ENCODE measurements at regions of chr15 and their contacts with region 1.

Region 1: DNA sequence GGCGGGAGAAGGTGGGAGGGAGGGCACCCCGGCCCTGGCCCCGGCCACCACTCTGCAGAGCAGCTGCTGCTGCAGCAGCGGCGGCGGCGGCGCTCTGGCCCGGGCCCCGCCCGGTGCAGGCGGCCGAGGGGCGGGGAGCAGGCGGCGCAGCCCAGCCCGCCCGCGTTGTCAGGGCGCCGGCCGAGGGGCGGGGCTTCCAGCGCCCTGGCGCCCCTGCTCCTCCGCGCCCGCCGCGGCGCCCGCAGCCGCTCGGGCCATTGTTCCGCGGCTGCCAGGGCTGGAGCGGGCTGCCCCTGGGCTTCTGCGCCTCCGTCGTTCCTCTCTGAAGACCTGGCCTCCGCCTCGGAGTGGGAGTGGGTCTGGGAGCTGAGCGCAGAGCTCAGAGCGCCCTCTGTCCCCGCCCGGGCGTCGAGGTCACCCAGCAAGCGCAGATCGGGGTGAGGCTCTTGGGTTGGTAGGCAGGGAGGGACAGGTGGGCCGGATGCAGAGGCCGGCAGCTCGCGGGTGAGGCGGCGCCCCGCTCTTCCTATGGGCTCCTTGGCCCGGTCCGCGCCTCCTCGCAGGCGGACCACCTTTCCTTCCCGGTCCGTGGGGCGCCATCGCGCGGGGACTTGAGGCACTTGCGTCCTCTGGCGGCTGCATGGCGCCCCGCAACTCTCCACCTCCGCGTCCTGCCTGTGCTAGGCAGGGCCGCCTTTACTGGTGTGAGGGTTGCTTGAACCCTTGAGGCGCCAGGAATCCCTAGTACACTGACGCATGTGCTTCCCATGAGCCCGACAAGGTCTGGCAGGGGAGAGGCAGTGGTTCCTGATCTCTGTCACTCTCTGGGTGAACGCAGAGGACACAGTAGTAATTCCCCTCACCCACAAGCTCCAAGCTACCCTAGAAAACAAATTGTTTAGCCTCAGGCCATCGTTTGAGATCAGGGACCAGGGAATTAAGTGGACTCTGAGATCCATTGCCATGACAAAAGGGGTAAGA is at the start of gene LPCAT4:
- DNase-seq: peak; percentile 82 to 96 (median 88)
- ATAC-seq: peak; percentile 84
- H3K4me3 ChIP-seq: peak within 1 kb of the TSS; percentile 94
- H3K4me3 Mint-ChIP-seq: peak within 1 kb of the TSS; percentile 97
- H3K27ac ChIP-seq: peak within 1 kb of the TSS; percentile 80 to 88
- H3K27ac Mint-ChIP-seq: peak within 1 kb of the TSS; percentile 92
- H3K4me1 ChIP-seq: peaks cover 40% of the 10 kb centered on the region
- H3K4me1 Mint-ChIP-seq: peaks cover 43% of the 10 kb centered on the region
- H3K27me3 ChIP-seq: no peaks in the 10 kb centered on the region
- H3K27me3 Mint-ChIP-seq: no peaks in the 10 kb centered on the region
- CTCF ChIP-seq: peak; percentile 90
- total RNA-seq, gene LPCAT4: 41.0 to 45.2 TPM

Region 2: GRCh38 chr15:33126559-33127290 is 1240.7 kb before region 1 on chr15:
- CTCF ChIA-PET with region 1: no interaction called
- POLR2A ChIA-PET with region 1: no interaction called
- intact Hi-C with region 1: loop called in 1 of 2 experiments (anchors 5 kb)
- DNase-seq: peak; percentile 33 to 89 (median 71)
- ATAC-seq: peak; percentile 81
- H3K4me3 ChIP-seq: peak overlapping the region; percentile 13
- H3K4me3 Mint-ChIP-seq: peak overlapping the region; percentile 72
- H3K27ac ChIP-seq: no peak overlapping the region
- H3K27ac Mint-ChIP-seq: peak overlapping the region; percentile 76
- H3K4me1 ChIP-seq: peaks cover 13% of the 10 kb centered on the region
- H3K4me1 Mint-ChIP-seq: peaks cover 31% of the 10 kb centered on the region
- H3K27me3 ChIP-seq: no peaks in the 10 kb centered on the region
- H3K27me3 Mint-ChIP-seq: no peaks in the 10 kb centered on the region
- CTCF ChIP-seq: no peak

Region 3: GRCh38 chr15:34101366-34102175 is 265.8 kb before region 1 on chr15 and contains the starts of genes EMC7 and PGBD4:
- CTCF ChIA-PET with region 1: interaction called, 9 read pairs
- POLR2A ChIA-PET with region 1: interaction called, 14 read pairs
- intact Hi-C with region 1: loop called in 1 of 2 experiments (anchors 2 kb)
- DNase-seq: peak; percentile 97 to 100 (median 99)
- ATAC-seq: peak; percentile 96
- H3K4me3 ChIP-seq: peak within 1 kb of the TSS; percentile 80
- H3K4me3 Mint-ChIP-seq: peak within 1 kb of the TSS; percentile 91
- H3K27ac ChIP-seq: peak within 1 kb of the TSS; percentile 86 to 97
- H3K27ac Mint-ChIP-seq: peak within 1 kb of the TSS; percentile 96
- H3K4me1 ChIP-seq: peaks cover 20% of the 10 kb centered on the region
- H3K4me1 Mint-ChIP-seq: peaks cover 54% of the 10 kb centered on the region
- H3K27me3 ChIP-seq: no peaks in the 10 kb centered on the region
- H3K27me3 Mint-ChIP-seq: no peaks in the 10 kb centered on the region
- CTCF ChIP-seq: no peak
- total RNA-seq, gene EMC7: 54.0 to 54.6 TPM
- total RNA-seq, gene PGBD4: 2.3 to 2.6 TPM

Region 4: GRCh38 chr15:34248190-34248589 is 119.2 kb before region 1 on chr15:
- CTCF ChIA-PET with region 1: interaction called, 51 read pairs
- POLR2A ChIA-PET with region 1: interaction called, 39 read pairs
- intact Hi-C with region 1: no loop called
- DNase-seq: no peak
- ATAC-seq: no peak
- H3K4me3 ChIP-seq: no peak overlapping the region
- H3K4me3 Mint-ChIP-seq: no peak overlapping the region
- H3K27ac ChIP-seq: no peak overlapping the region
- H3K27ac Mint-ChIP-seq: no peak overlapping the region
- H3K4me1 ChIP-seq: no peaks in the 10 kb centered on the region
- H3K4me1 Mint-ChIP-seq: no peaks in the 10 kb centered on the region
- H3K27me3 ChIP-seq: no peaks in the 10 kb centered on the region
- H3K27me3 Mint-ChIP-seq: no peaks in the 10 kb centered on the region
- CTCF ChIP-seq: no peak

Region 5: GRCh38 chr15:34331809-34332208 is 35.6 kb before region 1 on chr15:
- CTCF ChIA-PET with region 1: interaction called, 37 read pairs
- POLR2A ChIA-PET with region 1: interaction called, 72 read pairs
- intact Hi-C with region 1: loop called in 1 of 2 experiments (anchors 5 kb)
- DNase-seq: peak in 3 of 14 experiments; percentile 43 to 62 (median 49)
- ATAC-seq: peak; percentile 40
- H3K4me3 ChIP-seq: no peak overlapping the region
- H3K4me3 Mint-ChIP-seq: peak overlapping the region; percentile 40
- H3K27ac ChIP-seq: peak overlapping the region; percentile 18 to 39
- H3K27ac Mint-ChIP-seq: peak overlapping the region; percentile 98
- H3K4me1 ChIP-seq: peaks cover 55% of the 10 kb centered on the region
- H3K4me1 Mint-ChIP-seq: peaks cover 87% of the 10 kb centered on the region
- H3K27me3 ChIP-seq: no peaks in the 10 kb centered on the region
- H3K27me3 Mint-ChIP-seq: no peaks in the 10 kb centered on the region
- CTCF ChIP-seq: no peak

Region 6: GRCh38 chr15:34437687-34438086 is 70.3 kb after region 1 on chr15 and contains the start of gene GOLGA8A:
- CTCF ChIA-PET with region 1: interaction called, 3 read pairs
- POLR2A ChIA-PET with region 1: interaction called, 15 read pairs
- intact Hi-C with region 1: loop called in 1 of 2 experiments (anchors 2 kb)
- DNase-seq: peak; percentile 72 to 93 (median 84)
- ATAC-seq: peak; percentile 79
- H3K4me3 ChIP-seq: peak within 1 kb of the TSS; percentile 60
- H3K4me3 Mint-ChIP-seq: peak within 1 kb of the TSS; percentile 100
- H3K27ac ChIP-seq: peak within 1 kb of the TSS in 1 of 2 donors; percentile 7
- H3K27ac Mint-ChIP-seq: peak within 1 kb of the TSS; percentile 96
- H3K4me1 ChIP-seq: peaks cover 17% of the 10 kb centered on the region
- H3K4me1 Mint-ChIP-seq: peaks cover 27% of the 10 kb centered on the region
- H3K27me3 ChIP-seq: no peaks in the 10 kb centered on the region
- H3K27me3 Mint-ChIP-seq: peaks cover 5% of the 10 kb centered on the region
- CTCF ChIP-seq: no peak
- total RNA-seq, gene GOLGA8A: 276 to 295 TPM

Region 7: GRCh38 chr15:34927726-34928125 is 560.3 kb after region 1 on chr15:
- CTCF ChIA-PET with region 1: no interaction called
- POLR2A ChIA-PET with region 1: no interaction called
- intact Hi-C with region 1: no loop called
- DNase-seq: no peak
- ATAC-seq: no peak
- H3K4me3 ChIP-seq: no peak overlapping the region
- H3K4me3 Mint-ChIP-seq: no peak overlapping the region
- H3K27ac ChIP-seq: no peak overlapping the region
- H3K27ac Mint-ChIP-seq: no peak overlapping the region
- H3K4me1 ChIP-seq: no peaks in the 10 kb centered on the region
- H3K4me1 Mint-ChIP-seq: no peaks in the 10 kb centered on the region
- H3K27me3 ChIP-seq: no peaks in the 10 kb centered on the region
- H3K27me3 Mint-ChIP-seq: no peaks in the 10 kb centered on the region
- CTCF ChIP-seq: no peak